ENCODE measurements at regions of chr6 and their contacts with region 1.

Region 1: GRCh38 chr6:139364302-139364981 is 10.0 kb downstream of the CITED2 start:
- DNase-seq: no peak

Region 2: DNA sequence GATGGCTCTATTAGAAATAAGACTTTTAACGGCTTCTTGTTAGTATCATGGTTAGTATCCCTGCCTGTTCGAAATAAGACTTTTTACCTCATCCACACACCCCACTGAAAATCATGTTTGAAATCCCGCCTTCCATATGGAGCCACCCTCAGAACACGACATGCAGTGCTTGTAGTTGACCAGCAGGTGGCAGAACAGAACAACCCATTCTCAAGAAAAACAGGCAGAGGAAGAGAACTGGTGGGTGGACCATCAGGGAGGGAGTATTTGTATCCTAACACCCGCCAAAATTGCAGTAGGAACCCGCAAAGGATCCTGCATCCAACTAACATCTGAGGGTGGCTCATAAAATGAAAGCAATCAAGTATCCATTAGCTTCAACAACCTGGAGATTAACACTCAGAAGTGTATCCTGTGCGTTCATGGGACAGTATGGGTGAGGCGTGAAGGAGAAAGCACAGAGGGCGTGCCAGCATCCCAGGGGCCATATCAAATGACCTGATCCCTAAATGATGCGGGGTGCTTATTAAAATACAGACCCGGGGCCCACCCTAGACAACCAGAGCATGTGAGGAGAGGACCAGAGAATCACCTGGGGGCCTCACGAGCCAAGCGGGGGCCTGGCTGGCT is 775.5 kb before region 1 on chr6:
- intact Hi-C with region 1: loop called (anchors 5 kb)
- DNase-seq: peak in 5 of 10 donors; percentile 39 to 63 (median 53)

Region 3: DNA sequence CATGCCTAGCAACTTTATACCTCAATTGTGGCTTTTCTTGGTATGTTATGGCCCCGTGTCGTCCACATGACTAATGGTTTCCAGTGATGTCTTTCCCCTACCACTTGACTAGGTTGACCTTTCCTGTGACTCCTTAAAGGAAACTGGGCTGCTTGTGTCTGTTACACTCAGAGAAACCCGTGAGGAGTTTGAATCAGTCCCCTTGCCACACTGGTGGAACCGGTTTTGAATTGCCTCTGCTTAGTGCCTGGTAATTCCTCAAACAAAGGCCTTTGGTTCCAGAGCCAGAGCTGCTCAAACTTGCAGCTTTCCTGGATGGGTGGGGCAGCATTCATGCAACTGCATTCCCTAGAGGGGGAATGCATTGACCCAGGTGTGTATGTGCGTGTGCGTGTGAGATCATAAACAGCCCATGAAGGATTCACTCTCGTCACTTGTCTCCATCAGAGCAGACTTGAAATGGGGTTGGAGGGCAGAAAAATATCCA is 546.6 kb before region 1 on chr6:
- intact Hi-C with region 1: loop called (anchors 1 kb)
- DNase-seq: no peak

Region 4: GRCh38 chr6:139124887-139125672 is 239.4 kb before region 1 on chr6:
- intact Hi-C with region 1: loop called (anchors 10 kb)
- DNase-seq: no peak

Region 5: DNA sequence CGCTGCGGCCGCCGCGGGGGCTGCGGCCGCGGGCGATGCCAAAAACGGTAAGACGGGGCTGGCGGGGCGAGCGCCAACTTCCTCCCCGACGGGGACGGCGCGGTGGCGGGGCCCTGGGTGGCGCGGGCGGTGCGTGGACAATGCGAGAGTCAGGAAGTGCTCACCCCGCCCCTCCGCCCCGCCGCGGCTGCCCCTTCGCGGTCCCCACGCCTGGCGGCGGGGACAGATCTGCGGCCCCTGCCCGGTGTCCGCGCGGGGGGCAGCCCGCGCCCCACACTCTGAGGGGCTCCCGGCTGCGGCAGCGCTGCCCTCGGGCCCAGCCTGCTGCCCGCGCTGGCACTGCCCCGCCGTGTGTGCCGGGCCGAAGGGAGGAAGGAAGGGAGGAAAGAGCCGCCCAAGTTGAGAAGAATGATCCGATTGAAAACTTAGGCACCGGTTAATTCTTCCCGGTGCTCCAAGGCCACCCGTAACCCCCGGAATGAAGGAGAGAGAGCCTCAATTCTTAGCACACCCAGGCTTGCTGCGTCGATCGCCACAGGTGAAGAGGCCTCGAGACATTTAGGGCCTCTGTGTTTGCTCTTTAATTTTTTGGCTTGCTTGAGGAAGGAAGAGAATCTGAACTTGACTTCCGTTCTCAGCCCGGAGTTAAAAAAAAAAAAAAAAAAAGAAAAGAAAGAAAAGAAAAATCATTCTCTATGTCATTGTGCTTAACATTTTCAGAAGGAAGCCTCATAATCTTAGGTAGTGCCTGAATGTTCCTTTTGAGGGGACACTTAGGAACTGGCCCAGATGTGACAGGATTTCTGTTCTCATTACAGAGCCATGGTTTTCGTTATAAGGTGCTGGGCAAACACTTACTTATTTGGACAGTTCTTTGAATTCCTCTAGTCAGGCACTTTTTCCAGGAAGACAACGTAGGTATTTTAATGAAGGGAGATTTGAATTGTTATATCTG is 228.5 kb before region 1 on chr6:
- intact Hi-C with region 1: no loop called
- DNase-seq: peak; percentile 33 to 93 (median 52)

Region 6: GRCh38 chr6:139219271-139219729 is 145.1 kb before region 1 on chr6:
- intact Hi-C with region 1: loop called (anchors 1 kb)
- DNase-seq: peak; percentile 68 to 97 (median 83)

Region 7: DNA sequence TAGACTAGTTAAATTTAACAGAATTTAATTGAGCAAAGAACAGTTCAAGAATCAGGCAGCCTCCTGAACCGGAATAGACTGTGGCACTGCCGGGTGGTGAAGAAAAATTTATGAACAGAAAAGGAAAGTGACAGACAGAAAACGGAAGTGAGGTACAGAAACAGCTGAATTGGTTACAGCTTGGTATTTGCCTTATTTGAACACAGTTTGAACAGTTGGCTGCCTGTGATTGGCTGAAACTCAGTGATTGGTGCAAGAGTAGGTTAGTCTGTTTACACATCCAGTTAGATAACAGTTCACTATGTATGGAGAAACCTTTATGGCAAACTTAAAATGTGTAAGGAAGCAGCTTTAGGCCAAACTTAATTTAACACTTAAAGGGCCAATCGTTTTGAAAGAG is 126.0 kb after region 1 on chr6:
- intact Hi-C with region 1: no loop called
- DNase-seq: no peak

Region 8: DNA sequence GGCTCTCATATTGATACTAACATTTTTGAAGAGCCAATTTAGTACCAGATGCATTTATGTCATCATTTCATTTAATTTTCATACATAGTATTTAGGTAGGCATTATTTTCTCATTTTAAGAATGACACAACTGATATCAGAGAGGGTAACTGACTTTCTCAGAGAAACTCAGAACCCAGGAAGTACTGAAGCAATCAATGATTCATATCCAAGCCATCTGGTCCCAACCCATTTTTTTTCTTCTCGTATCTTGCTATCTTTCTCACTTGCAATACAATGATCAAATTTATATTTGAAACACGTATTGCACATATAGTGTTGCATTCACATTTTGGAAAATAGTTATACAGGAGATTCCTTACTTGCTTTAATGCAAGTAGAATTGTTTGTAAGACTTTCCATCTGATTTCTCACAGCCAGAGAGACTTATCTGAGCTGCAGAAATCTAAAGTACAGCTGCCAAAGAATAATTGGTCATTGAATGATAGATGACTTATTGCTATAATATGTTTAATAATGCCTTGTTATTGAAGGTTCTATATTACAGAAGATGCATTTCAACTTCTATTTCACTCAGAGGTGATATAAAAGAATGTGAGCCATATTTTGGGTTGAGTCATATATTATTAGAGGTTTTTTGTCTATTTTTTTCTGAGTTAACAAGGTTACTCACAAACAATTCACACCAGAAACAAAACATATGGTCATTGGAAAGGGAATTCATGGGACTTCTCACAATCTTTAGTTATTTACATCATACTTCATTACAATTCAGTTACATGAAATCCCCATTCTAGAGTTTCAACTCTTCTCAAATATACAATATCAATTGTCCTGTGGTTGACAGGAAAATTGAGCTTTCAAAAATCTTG is 347.5 kb after region 1 on chr6:
- intact Hi-C with region 1: no loop called
- DNase-seq: no peak